Heart left ventricle (tissue), 16 donors: ENCODE measurements at regions of chrX and their contacts with region 1.

Region 1: GRCh38 chrX:39409246-39409917 is 608.1 kb downstream of the MID1IP1 start:
- DNase-seq: no peak
- ATAC-seq: no peak
- H3K4me3 ChIP-seq: no peak overlapping the region
- H3K27ac ChIP-seq: no peak overlapping the region
- H3K4me1 ChIP-seq: no peaks in the 10 kb centered on the region
- H3K27me3 ChIP-seq: peaks cover 0 to 39% (median 0%) of the 10 kb centered on the region in 9 donors
- CTCF ChIP-seq: no peak
- POLR2A ChIP-seq: no peak

Region 2: DNA sequence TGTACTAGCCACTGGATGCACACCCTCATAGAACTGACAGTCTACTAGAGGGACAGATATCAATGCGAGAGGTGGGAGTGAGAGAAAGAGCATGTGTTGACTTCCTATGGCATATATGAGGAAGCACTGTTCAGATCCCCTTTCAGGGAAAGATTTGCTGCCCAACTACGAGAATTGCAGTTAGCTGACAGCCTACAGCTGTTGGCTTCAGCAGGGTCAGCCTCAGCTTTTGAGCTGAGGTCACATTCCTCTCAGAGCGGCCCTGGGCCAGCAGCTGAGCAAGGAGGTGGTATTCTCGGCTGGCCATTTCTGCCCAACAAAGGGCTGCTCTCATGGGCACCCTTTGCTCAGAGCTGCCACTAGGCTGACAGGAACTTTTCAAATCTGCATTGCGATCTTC is 28.0 kb before region 1 on chrX:
- intact Hi-C with region 1: loop called in 1 of 10 experiments (anchors 2 kb)
- DNase-seq: peak in 1 of 5 donors; percentile 20
- ATAC-seq: no peak
- H3K4me3 ChIP-seq: no peak overlapping the region
- H3K27ac ChIP-seq: no peak overlapping the region
- H3K4me1 ChIP-seq: no peaks in the 10 kb centered on the region
- H3K27me3 ChIP-seq: peaks cover 0 to 25% (median 0%) of the 10 kb centered on the region in 9 donors
- CTCF ChIP-seq: no peak
- POLR2A ChIP-seq: no peak